PC-9 (cell line): ENCODE measurements at regions of chr2 and their contacts with region 1.

Region 1: DNA sequence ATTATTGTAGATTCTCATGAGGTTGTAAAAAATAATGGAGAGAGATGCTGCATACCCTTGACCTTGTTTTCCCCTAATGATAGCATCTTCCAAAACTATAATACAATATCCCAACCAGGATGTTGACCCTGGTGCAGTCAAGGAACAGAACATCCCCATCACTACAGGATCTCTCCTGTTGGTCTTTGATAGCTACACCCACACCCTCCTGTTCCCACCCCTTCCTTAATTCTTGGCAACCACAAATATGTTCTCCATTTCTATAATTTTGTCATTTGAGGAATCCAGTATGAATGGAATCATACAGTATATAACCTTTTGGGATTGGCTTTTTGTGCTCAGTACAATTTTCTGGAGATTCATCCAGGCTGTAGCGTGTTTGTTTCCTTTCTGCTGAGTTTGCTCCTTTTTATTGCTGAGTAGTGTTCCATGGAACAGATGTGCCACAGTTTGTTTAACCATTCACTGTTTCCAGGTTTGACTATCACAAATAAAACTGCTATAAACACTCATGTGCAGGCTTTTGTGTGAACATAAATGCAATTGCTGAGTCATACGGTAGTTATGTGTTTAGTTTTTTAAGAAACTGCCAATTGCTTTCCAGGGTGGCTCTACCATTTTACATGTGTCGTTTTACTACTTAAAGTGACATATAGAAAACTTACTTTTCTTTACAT is 22.2 kb downstream of the MCFD2 start:
- DNase-seq: no peak
- H3K4me3 ChIP-seq: no peak overlapping the region
- H3K27ac ChIP-seq: no peak overlapping the region
- H3K4me1 ChIP-seq: 0 out of 2 replicates have a peak, but pooled peaks cover 6% of the 10 kb centered on the region
- H3K27me3 ChIP-seq: no peaks in the 10 kb centered on the region
- CTCF ChIP-seq: no peak

Region 2: DNA sequence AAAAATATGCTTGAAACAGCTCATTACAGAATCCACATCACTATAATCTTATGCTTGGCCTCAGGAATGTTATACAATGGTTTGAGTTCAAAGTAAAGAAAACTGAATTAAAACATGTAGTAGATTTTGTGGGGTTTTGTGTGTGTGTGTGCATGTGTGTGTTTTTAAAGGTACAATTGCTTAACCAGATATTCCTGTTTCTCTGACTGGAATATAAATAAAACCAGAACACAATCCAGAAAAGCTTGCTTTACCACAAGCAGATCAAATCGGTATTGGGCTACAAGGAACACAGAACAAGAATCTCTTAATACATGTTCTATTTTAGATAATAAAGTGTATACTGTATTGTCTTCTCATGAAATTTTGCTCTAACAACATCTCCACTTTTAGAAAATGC is 304.0 kb before region 1 on chr2:
- CTCF ChIA-PET with region 1: interaction called, 11 read pairs
- POLR2A ChIA-PET with region 1: no interaction called
- intact Hi-C with region 1: no loop called
- DNase-seq: peak in 1 of 2 experiments; percentile 49
- H3K4me3 ChIP-seq: no peak overlapping the region
- H3K27ac ChIP-seq: no peak overlapping the region
- H3K4me1 ChIP-seq: peaks cover 4% of the 10 kb centered on the region; the same call in 1 of the 2 replicates
- H3K27me3 ChIP-seq: no peaks in the 10 kb centered on the region
- CTCF ChIP-seq: no peak

Region 3: GRCh38 chr2:46676198-46676597 is 217.2 kb before region 1 on chr2:
- CTCF ChIA-PET with region 1: no interaction called
- POLR2A ChIA-PET with region 1: interaction called, 11 read pairs
- intact Hi-C with region 1: no loop called
- DNase-seq: no peak
- H3K4me3 ChIP-seq: no peak overlapping the region
- H3K27ac ChIP-seq: no peak overlapping the region
- H3K4me1 ChIP-seq: no peaks in the 10 kb centered on the region
- H3K27me3 ChIP-seq: no peaks in the 10 kb centered on the region
- CTCF ChIP-seq: no peak

Region 4: GRCh38 chr2:46923041-46923528 is 29.7 kb after region 1 on chr2:
- CTCF ChIA-PET with region 1: no interaction called
- POLR2A ChIA-PET with region 1: no interaction called
- intact Hi-C with region 1: no loop called
- DNase-seq: peak; percentile 19 to 82
- H3K4me3 ChIP-seq: no peak overlapping the region
- H3K27ac ChIP-seq: peak overlapping the region; percentile 90
- H3K4me1 ChIP-seq: peaks cover 67% of the 10 kb centered on the region
- H3K27me3 ChIP-seq: no peaks in the 10 kb centered on the region
- CTCF ChIP-seq: no peak

Region 5: GRCh38 chr2:47002480-47003381 is 109.3 kb after region 1 on chr2:
- CTCF ChIA-PET with region 1: no interaction called
- POLR2A ChIA-PET with region 1: no interaction called
- intact Hi-C with region 1: no loop called
- DNase-seq: peak in 1 of 2 experiments; percentile 53
- H3K4me3 ChIP-seq: no peak overlapping the region
- H3K27ac ChIP-seq: no peak overlapping the region
- H3K4me1 ChIP-seq: peaks cover 32% of the 10 kb centered on the region
- H3K27me3 ChIP-seq: no peaks in the 10 kb centered on the region
- CTCF ChIP-seq: no peak